ENCODE measurements at regions of chr1 and their contacts with region 1.

Region 1: GRCh38 chr1:108691942-108692723 is at the start of gene PRPF38B:
- DNase-seq: peak; percentile 66
- ATAC-seq: peak; percentile 93
- H3K4me3 ChIP-seq: peak within 1 kb of the TSS; percentile 96
- H3K27ac ChIP-seq: peak within 1 kb of the TSS; percentile 88
- H3K4me1 ChIP-seq: no peaks in the 10 kb centered on the region
- H3K27me3 ChIP-seq: no peaks in the 10 kb centered on the region
- CTCF ChIP-seq: no peak
- EP300 ChIP-seq: no peak
- POLR2A ChIP-seq: peak; percentile 99
- RAD21 ChIP-seq: no peak
- polyA plus RNA-seq, gene PRPF38B: 32.9 to 37.9 TPM

Region 2: GRCh38 chr1:108661030-108661620 is 31.0 kb before region 1 on chr1 and contains the start of gene HENMT1:
- CTCF ChIA-PET with region 1: interaction called, 5 read pairs
- POLR2A ChIA-PET with region 1: interaction called, 7 read pairs
- RAD21 ChIA-PET with region 1: interaction called, 12 read pairs
- SMC1A ChIA-PET with region 1: interaction called, 10 read pairs
- in situ Hi-C with region 1: no loop called
- intact Hi-C with region 1: no loop called
- DNase-seq: peak; percentile 23
- ATAC-seq: peak; percentile 91
- H3K4me3 ChIP-seq: peak within 1 kb of the TSS; percentile 62
- H3K27ac ChIP-seq: peak within 1 kb of the TSS; percentile 82
- H3K4me1 ChIP-seq: peaks cover 10% of the 10 kb centered on the region; the same call in 1 of the 2 replicates
- H3K27me3 ChIP-seq: no peaks in the 10 kb centered on the region
- CTCF ChIP-seq: no peak
- EP300 ChIP-seq: 0 out of 4 replicates have a peak, but pooled peaks of 1 of the 2 experiments have one; percentile 10
- POLR2A ChIP-seq: peak; percentile 93
- RAD21 ChIP-seq: no peak
- polyA plus RNA-seq, gene HENMT1: 13.6 to 15.2 TPM

Region 3: GRCh38 chr1:108708691-108709660 is 16.8 kb after region 1 on chr1:
- CTCF ChIA-PET with region 1: interaction called, 11 read pairs
- POLR2A ChIA-PET with region 1: interaction called, 7 read pairs
- RAD21 ChIA-PET with region 1: no interaction called
- SMC1A ChIA-PET with region 1: interaction called, 10 read pairs
- in situ Hi-C with region 1: no loop called
- intact Hi-C with region 1: no loop called
- DNase-seq: no peak
- ATAC-seq: peak; percentile 86
- H3K4me3 ChIP-seq: no peak overlapping the region
- H3K27ac ChIP-seq: no peak overlapping the region
- H3K4me1 ChIP-seq: peaks cover 1% of the 10 kb centered on the region; the same call in 1 of the 2 replicates
- H3K27me3 ChIP-seq: no peaks in the 10 kb centered on the region; a peak in 1 of 4 replicates
- CTCF ChIP-seq: peak; percentile 33 to 58 (median 36)
- EP300 ChIP-seq: no peak
- POLR2A ChIP-seq: no peak
- RAD21 ChIP-seq: peak; percentile 47

Region 4: DNA sequence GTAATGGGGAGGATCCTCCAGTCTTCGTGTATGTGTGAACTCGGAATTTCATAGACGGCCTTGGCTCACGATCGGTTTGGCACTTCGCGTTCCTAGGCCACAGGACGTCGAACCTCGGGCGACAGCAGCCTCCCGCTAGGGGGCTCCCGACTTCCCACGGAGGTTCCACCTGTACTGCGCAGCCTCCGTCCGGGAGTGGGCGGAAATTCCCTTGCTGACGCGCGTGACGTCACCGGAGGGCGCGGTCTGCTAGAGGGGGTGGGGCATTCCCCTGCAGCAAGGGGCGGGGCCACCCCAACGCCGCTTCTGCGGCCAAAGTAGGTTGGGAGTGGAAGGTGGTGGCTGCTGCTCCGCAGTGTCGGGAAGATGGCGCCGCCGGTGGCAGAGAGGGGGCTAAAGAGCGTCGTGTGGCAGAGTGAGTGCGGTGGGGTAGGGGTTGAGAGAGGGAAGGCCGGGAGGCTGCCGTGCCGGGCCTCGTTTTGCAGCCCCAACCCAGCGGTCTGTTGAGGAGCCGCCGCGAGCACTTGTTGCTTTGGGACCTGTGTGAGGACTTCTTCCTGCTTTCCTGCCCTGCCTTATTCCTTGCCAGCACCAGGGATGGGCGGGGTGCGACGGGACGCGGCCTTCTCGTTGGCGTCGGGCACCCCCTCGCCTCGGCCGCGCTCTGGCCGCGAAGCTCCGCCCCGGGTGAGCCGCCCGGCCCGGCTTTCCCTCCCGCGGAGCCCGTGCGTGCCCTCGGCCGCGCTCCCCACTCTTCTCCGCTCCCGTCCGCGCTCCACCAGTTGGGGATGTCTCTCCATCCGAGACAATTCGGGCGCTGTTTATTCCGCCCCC is 54.5 kb after region 1 on chr1 and contains the start of gene STXBP3:
- CTCF ChIA-PET with region 1: interaction called, 4 read pairs
- POLR2A ChIA-PET with region 1: no interaction called
- RAD21 ChIA-PET with region 1: interaction called, 4 read pairs
- SMC1A ChIA-PET with region 1: interaction called, 3 read pairs
- in situ Hi-C with region 1: no loop called
- intact Hi-C with region 1: loop called (anchors 2 kb)
- DNase-seq: peak; percentile 95
- ATAC-seq: peak; percentile 94
- H3K4me3 ChIP-seq: peak within 1 kb of the TSS; percentile 94
- H3K27ac ChIP-seq: peak within 1 kb of the TSS; percentile 87
- H3K4me1 ChIP-seq: no peaks in the 10 kb centered on the region
- H3K27me3 ChIP-seq: no peaks in the 10 kb centered on the region
- CTCF ChIP-seq: peak; percentile 91 to 98 (median 96)
- EP300 ChIP-seq: no peak
- POLR2A ChIP-seq: peak; percentile 97
- RAD21 ChIP-seq: no peak
- polyA plus RNA-seq, gene STXBP3: 21.7 to 23.6 TPM

Region 5: DNA sequence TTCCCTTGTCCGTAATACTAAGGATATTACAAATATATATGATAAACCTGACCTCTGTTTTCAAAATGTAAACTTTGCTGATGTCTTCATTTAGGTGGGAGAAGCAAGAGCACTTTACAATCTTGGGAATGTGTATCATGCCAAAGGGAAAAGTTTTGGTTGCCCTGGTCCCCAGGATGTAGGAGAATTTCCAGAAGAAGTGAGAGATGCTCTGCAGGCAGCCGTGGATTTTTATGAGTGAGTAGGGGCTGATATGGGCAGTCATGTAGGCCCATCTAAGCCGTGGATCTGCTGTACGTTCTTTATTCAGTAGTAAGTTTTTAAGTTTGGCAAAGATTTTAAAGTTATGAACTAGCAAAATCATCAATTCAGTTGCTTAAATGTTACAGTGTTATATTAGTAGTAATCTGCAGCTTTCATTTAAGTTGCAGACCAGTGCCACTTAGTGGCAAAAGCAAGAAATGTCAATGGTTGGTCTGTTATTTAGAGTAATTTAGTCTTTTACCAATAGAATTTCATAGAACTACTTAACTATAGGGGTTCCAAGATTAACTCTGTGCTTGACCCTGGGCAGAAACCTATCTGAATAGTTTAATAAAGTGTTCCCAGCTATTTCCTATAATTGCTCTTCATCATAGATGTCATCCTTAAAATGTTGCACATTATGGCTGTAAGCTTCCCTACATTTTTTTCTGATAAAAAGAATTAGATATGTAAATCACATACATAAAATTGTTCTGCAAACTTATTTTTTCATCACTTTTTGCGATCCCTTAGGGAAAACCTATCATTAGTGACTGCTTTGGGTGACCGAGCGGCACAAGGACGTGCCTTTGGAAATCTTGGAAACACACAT is 206.0 kb after region 1 on chr1:
- CTCF ChIA-PET with region 1: interaction called, 10 read pairs
- POLR2A ChIA-PET with region 1: no interaction called
- RAD21 ChIA-PET with region 1: interaction called, 5 read pairs
- SMC1A ChIA-PET with region 1: interaction called, 3 read pairs
- in situ Hi-C with region 1: no loop called
- intact Hi-C with region 1: loop called (anchors 5 kb)
- DNase-seq: no peak
- ATAC-seq: peak; percentile 82
- H3K4me3 ChIP-seq: no peak overlapping the region
- H3K27ac ChIP-seq: no peak overlapping the region
- H3K4me1 ChIP-seq: no peaks in the 10 kb centered on the region
- H3K27me3 ChIP-seq: no peaks in the 10 kb centered on the region
- CTCF ChIP-seq: peak; percentile 55 to 80 (median 64)
- EP300 ChIP-seq: no peak
- POLR2A ChIP-seq: no peak
- RAD21 ChIP-seq: peak; percentile 86

Measured in GM12878 (cell line).